Prostate gland (tissue), 2 donors: ENCODE measurements at regions of chr5 and their contacts with region 1.

Region 1: GRCh38 chr5:10452768-10453331 is 11.2 kb downstream of the ROPN1L start:
- DNase-seq: no peak
- H3K4me3 ChIP-seq: no peak overlapping the region
- H3K27ac ChIP-seq: no peak overlapping the region
- H3K4me1 ChIP-seq: no peaks in the 10 kb centered on the region
- H3K27me3 ChIP-seq: no peaks in the 10 kb centered on the region
- CTCF ChIP-seq: peak; percentile 30 to 88 (median 66)
- POLR2A ChIP-seq: no peak

Region 2: GRCh38 chr5:10627160-10627701 is 174.4 kb after region 1 on chr5:
- intact Hi-C with region 1: loop called (anchors 2 kb)
- DNase-seq: no peak
- H3K4me3 ChIP-seq: peak overlapping the region in 1 of 2 donors; percentile 6
- H3K27ac ChIP-seq: peak overlapping the region; percentile 44 to 59
- H3K4me1 ChIP-seq: peaks cover 9% of the 10 kb centered on the region
- H3K27me3 ChIP-seq: no peaks in the 10 kb centered on the region
- CTCF ChIP-seq: no peak
- POLR2A ChIP-seq: no peak

Region 3: GRCh38 chr5:10885026-10885425 is 432.2 kb after region 1 on chr5:
- intact Hi-C with region 1: no loop called
- DNase-seq: no peak
- H3K4me3 ChIP-seq: no peak overlapping the region
- H3K27ac ChIP-seq: no peak overlapping the region
- H3K4me1 ChIP-seq: no peaks in the 10 kb centered on the region
- H3K27me3 ChIP-seq: no peaks in the 10 kb centered on the region
- CTCF ChIP-seq: no peak
- POLR2A ChIP-seq: no peak